Activated CD4-positive, alpha-beta memory T cell treated with anti-CD3 and anti-CD28 coated beads, Interleukin-2, amount 10 ng/mL, durations not matched to agents 7 days and 5 days (primary cell): ENCODE measurements at regions of chr12 and their contacts with region 1.

Region 1: GRCh38 chr12:21527451-21528180 is 1.5 kb downstream of the SPX start:
- DNase-seq: peak; percentile 72
- H3K4me3 Mint-ChIP-seq: peak overlapping the region; percentile 70
- H3K27ac Mint-ChIP-seq: no peak overlapping the region
- H3K4me1 Mint-ChIP-seq: peaks cover 10% of the 10 kb centered on the region
- H3K27me3 Mint-ChIP-seq: peaks cover 21% of the 10 kb centered on the region

Region 2: GRCh38 chr12:21509768-21510167 is 17.8 kb before region 1 on chr12:
- CTCF ChIA-PET with region 1: no interaction called
- POLR2A ChIA-PET with region 1: interaction called, 15 read pairs
- DNase-seq: peak; percentile 24
- H3K4me3 Mint-ChIP-seq: peak overlapping the region; percentile 69
- H3K27ac Mint-ChIP-seq: peak overlapping the region; percentile 85
- H3K4me1 Mint-ChIP-seq: peaks cover 38% of the 10 kb centered on the region
- H3K27me3 Mint-ChIP-seq: no peaks in the 10 kb centered on the region

Region 3: GRCh38 chr12:21551841-21552465 is 24.3 kb after region 1 on chr12:
- CTCF ChIA-PET with region 1: no interaction called
- POLR2A ChIA-PET with region 1: no interaction called
- DNase-seq: no peak
- H3K4me3 Mint-ChIP-seq: no peak overlapping the region
- H3K27ac Mint-ChIP-seq: no peak overlapping the region
- H3K4me1 Mint-ChIP-seq: no peaks in the 10 kb centered on the region
- H3K27me3 Mint-ChIP-seq: no peaks in the 10 kb centered on the region